ENCODE measurements at regions of chr14 and their contacts with region 1.

Region 1: GRCh38 chr14:73633116-73634010 is 11.4 kb upstream of the DNAL1 start:
- DNase-seq: peak in 4 of 5 donors; percentile 47 to 74 (median 56)
- ATAC-seq: peak; percentile 78 to 92 (median 90)
- H3K4me3 ChIP-seq: peak overlapping the region; percentile 43 to 71 (median 62)
- H3K27ac ChIP-seq: peak overlapping the region in 11 of 12 donors; percentile 18 to 81 (median 70)
- H3K4me1 ChIP-seq: peaks cover 0 to 19% (median 5%) of the 10 kb centered on the region in 12 donors
- H3K27me3 ChIP-seq: peaks cover 0 to 8% (median 0%) of the 10 kb centered on the region in 9 donors
- CTCF ChIP-seq: peak; percentile 75 to 94 (median 88)
- POLR2A ChIP-seq: no peak

Region 2: GRCh38 chr14:73333031-73333430 is 300.3 kb before region 1 on chr14:
- intact Hi-C with region 1: no loop called
- DNase-seq: no peak
- ATAC-seq: no peak
- H3K4me3 ChIP-seq: no peak overlapping the region
- H3K27ac ChIP-seq: no peak overlapping the region
- H3K4me1 ChIP-seq: peaks cover 0 to 16% (median 1%) of the 10 kb centered on the region in 12 donors
- H3K27me3 ChIP-seq: no peaks in the 10 kb centered on the region
- CTCF ChIP-seq: no peak
- POLR2A ChIP-seq: no peak

Region 3: DNA sequence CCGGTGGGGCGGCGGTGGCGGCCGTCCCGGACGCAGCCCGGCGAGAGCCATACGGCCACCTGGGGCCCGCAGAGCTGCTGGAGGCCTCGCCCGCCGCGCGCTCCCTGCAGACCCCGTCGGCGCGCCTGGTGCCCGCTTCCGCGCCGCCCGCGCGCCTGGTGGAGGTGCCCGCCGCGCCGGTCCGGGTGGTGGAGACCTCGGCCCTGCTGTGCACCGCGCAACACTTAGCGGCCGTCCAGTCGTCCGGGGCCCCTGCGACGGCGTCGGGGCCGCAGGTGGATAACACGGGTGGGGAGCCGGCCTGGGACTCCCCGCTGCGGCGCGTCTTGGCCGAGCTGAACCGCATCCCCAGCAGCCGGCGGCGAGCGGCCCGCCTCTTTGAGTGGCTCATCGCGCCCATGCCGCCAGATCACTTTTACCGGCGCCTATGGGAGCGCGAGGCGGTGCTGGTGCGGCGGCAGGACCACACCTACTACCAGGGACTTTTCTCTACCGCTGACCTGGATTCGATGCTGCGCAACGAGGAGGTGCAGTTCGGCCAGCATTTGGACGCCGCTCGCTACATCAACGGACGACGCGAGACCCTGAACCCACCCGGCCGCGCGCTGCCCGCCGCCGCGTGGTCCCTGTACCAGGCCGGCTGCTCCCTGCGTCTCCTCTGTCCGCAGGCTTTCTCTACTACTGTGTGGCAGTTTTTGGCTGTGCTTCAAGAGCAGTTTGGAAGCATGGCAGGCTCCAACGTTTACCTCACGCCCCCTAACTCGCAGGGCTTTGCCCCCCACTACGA is 141.9 kb before region 1 on chr14:
- intact Hi-C with region 1: loop called in 1 of 10 experiments (anchors 5 kb)
- DNase-seq: peak; percentile 35 to 78 (median 61)
- ATAC-seq: peak in 3 of 4 donors; percentile 29 to 64 (median 62)
- H3K4me3 ChIP-seq: peak overlapping the region; percentile 40 to 92 (median 78)
- H3K27ac ChIP-seq: peak overlapping the region; percentile 66 to 95 (median 88)
- H3K4me1 ChIP-seq: peaks cover 0 to 43% (median 28%) of the 10 kb centered on the region in 12 donors
- H3K27me3 ChIP-seq: no peaks in the 10 kb centered on the region
- CTCF ChIP-seq: no peak
- POLR2A ChIP-seq: no peak

Region 4: DNA sequence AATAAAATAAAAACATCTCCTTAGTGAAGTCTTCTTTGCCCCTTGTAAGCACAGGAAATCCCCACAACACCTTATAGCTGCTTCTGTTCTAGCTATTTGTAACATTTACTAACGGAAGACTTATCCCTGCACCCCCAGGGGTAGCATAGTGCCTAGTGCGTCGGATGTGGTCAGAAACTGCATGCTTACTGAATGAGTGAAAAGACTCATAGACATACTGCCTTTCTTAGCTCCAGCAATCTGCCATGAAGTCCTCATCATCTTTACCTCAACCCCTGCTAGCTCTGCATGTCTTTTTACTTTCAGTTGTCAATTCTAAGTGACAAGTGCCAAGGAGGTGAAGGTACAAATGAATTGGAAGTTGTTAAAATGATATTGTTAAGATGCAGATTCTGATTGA is 129.7 kb before region 1 on chr14:
- intact Hi-C with region 1: loop called (anchors 1 to 5 kb)
- DNase-seq: no peak
- ATAC-seq: no peak
- H3K4me3 ChIP-seq: no peak overlapping the region
- H3K27ac ChIP-seq: no peak overlapping the region
- H3K4me1 ChIP-seq: peaks cover 0 to 3% (median 0%) of the 10 kb centered on the region in 12 donors
- H3K27me3 ChIP-seq: no peaks in the 10 kb centered on the region
- CTCF ChIP-seq: no peak
- POLR2A ChIP-seq: no peak